ENCODE measurements at regions of chr11 and their contacts with region 1.

Region 1: DNA sequence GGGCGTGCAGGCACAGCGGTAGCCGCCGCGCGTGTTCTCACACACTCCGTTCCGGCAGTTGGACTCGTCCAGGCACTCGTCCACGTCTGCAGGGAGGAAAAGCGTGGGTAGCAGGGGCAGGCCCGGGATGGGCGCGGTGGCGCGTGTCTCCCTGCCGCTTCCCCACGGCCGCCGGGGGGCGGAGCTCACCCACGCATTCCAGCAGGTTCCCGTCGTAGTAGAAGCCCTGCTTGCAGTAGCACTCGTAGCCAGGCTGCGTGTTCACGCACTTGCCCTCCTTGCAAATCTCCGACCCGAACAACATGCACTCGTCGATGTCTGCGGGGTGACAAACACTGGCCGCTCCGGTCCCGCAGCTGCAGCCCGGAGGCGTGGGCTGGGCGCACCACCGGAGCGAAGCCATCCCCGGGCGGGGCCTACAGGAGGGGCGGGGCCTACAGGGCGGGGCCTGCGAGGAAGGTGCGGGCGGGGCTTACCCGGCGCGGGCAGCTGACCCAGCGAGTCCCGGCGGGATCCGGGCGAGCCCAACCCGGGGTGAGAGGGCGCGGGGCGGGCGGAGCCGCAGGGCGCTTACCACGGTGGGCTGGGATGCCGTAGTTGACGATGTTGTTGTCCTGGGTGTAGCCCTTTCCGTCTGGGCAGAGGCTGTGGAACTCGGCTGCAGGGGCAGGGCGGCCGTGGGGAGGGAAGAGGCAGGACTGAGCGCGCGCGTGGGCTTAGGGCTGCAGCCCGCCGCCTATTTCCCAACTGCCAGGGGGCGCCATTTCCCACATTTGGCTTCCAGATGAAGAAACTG is 15.6 kb downstream of the SCYL1 start:
- DNase-seq: peak; percentile 82 to 92 (median 89)
- H3K4me3 ChIP-seq: peak overlapping the region; percentile 74
- H3K4me3 Mint-ChIP-seq: peak overlapping the region; percentile 82 to 94 (median 87)
- H3K27ac ChIP-seq: peak overlapping the region; percentile 44
- H3K27ac Mint-ChIP-seq: peak overlapping the region; percentile 78 to 93 (median 84)
- H3K4me1 ChIP-seq: peaks cover 11% of the 10 kb centered on the region
- H3K4me1 Mint-ChIP-seq: peaks cover 13 to 20% (median 14%) of the 10 kb centered on the region in 3 donors
- H3K27me3 ChIP-seq: no peaks in the 10 kb centered on the region
- H3K27me3 Mint-ChIP-seq: no peaks in the 10 kb centered on the region

Region 2: DNA sequence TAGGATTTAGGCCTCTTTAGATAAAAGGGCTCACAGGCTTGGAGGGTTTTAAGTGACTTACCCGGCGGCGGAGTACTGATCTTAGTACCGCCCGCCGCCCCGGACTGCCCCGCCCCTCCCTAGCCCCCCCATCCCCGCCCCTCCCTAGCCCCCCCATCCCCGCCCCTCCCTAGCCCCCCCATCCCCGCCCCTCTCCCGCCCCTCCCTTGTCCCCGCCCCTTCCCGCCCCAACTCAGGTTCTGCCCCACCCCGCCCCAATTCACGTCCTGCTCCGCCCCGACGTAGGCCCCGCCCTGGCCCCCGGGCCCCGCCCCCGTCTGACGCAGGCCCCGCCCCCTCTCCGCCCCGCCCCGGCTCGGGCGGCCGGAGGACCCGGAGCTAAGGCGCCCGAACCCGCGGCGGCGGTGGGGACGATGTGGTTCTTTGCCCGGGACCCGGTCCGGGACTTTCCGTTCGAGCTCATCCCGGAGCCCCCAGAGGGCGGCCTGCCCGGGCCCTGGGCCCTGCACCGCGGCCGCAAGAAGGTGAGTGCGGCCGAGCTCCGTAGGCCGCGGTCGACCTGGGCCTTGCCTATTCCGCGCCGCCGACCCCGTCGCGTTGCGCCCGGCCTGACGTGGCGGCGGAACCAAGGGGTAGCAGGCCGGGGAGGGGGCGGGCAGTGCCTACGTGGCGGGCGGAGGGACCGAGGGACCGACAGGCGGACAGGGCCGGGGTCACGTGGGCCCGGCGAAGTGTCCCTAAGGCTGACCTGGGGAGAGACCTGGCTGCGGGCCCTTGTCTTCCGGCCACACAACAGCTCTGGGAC is 15.6 kb before region 1 on chr11 and contains the start of gene SCYL1:
- CTCF ChIA-PET with region 1: interaction called, 42 read pairs
- POLR2A ChIA-PET with region 1: interaction called, 7 read pairs
- DNase-seq: peak; percentile 72 to 88 (median 76)
- H3K4me3 ChIP-seq: peak within 1 kb of the TSS; percentile 75
- H3K4me3 Mint-ChIP-seq: peak within 1 kb of the TSS; percentile 81 to 91 (median 85)
- H3K27ac ChIP-seq: peak within 1 kb of the TSS; percentile 76
- H3K27ac Mint-ChIP-seq: peak within 1 kb of the TSS; percentile 73 to 97 (median 92)
- H3K4me1 ChIP-seq: peaks cover 52% of the 10 kb centered on the region
- H3K4me1 Mint-ChIP-seq: peaks cover 45 to 62% (median 46%) of the 10 kb centered on the region in 3 donors
- H3K27me3 ChIP-seq: no peaks in the 10 kb centered on the region
- H3K27me3 Mint-ChIP-seq: peaks cover 0 to 1% of the 10 kb centered on the region in 2 donors
- total RNA-seq, gene SCYL1: 85.1 to 88.5 TPM

Region 3: DNA sequence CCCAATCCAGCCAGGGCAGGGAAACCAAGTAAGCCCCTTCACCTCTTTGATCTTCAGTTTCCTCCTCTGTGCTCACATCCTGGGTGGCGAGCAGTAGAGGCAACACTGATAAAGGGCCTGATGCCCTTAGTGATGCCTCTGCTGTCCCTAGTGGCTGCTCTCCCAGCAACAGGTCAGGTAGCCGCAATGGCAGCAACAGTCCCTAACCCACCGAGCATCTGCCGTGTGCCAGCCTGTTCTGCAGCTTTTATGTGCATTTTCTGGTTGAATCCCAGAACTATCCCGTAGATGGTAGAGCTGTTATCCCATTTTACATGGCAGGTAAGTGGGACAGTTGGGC is 10.4 kb before region 1 on chr11:
- CTCF ChIA-PET with region 1: interaction called, 42 read pairs
- POLR2A ChIA-PET with region 1: interaction called, 7 read pairs
- DNase-seq: peak in 1 of 5 donors; percentile 45
- H3K4me3 ChIP-seq: no peak overlapping the region
- H3K4me3 Mint-ChIP-seq: peak overlapping the region in 1 of 7 donors; percentile 32
- H3K27ac ChIP-seq: no peak overlapping the region
- H3K27ac Mint-ChIP-seq: peak overlapping the region in 7 of 8 donors; percentile 23 to 87 (median 52)
- H3K4me1 ChIP-seq: peaks cover 29% of the 10 kb centered on the region
- H3K4me1 Mint-ChIP-seq: peaks cover 20 to 35% (median 24%) of the 10 kb centered on the region in 3 donors
- H3K27me3 ChIP-seq: no peaks in the 10 kb centered on the region
- H3K27me3 Mint-ChIP-seq: no peaks in the 10 kb centered on the region

Region 4: GRCh38 chr11:65551572-65552398 is 11.3 kb after region 1 on chr11:
- CTCF ChIA-PET with region 1: interaction called, 41 read pairs
- POLR2A ChIA-PET with region 1: interaction called, 6 read pairs
- DNase-seq: peak; percentile 43 to 73 (median 54)
- H3K4me3 ChIP-seq: peak overlapping the region; percentile 17
- H3K4me3 Mint-ChIP-seq: peak overlapping the region in 5 of 7 donors; percentile 3 to 32 (median 13)
- H3K27ac ChIP-seq: no peak overlapping the region
- H3K27ac Mint-ChIP-seq: peak overlapping the region; percentile 51 to 97 (median 80)
- H3K4me1 ChIP-seq: peaks cover 75% of the 10 kb centered on the region
- H3K4me1 Mint-ChIP-seq: peaks cover 56 to 77% (median 62%) of the 10 kb centered on the region in 3 donors
- H3K27me3 ChIP-seq: no peaks in the 10 kb centered on the region
- H3K27me3 Mint-ChIP-seq: no peaks in the 10 kb centered on the region

Region 5: DNA sequence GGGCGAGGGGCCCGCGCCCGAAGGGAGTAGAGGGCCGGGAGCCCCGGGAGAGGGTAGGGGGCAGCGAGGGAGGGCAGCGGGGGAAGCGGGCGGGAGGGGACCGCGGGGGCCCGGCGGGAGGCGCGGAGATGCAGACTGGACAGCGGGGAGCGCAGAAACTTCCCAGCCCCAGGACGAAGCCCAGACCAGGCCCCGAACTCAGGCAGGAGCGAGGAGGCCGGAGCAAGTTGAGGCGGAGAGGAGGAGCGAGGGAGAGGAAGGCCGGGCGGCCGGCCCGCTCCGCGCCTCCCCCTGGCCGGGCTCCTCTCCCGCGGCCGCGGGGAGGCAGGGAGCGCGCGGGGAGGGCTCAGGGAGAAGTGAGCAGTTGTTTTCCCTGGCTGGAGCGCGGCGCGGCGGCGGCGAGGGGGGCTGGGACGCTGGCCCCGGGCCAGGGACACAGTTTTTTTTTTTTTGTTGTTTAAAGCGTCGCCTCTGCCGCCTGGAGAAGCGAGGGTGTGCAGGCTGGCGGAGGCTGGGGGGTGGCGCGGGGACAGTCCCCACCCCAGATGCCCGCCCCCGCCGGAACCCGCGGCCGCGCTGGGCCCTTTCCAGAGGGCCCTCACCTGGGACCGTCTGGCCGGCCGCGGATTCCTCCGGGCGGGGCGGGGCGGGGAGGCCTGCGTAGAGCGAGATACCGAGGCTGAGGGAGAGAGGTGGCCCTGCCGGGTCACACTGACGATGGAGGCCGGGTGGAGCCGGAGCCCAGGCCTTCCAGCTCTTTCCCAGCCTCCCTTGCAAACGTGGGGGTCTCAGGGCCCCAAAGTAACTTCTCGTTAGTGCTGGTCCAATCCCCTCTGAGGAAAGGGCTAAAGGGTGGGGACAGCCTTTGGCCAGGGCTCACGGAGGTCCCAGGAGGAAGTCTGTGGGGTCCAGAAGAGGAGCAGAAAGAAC is 17.8 kb after region 1 on chr11 and contains the start of gene LTBP3:
- CTCF ChIA-PET with region 1: interaction called, 41 read pairs
- POLR2A ChIA-PET with region 1: interaction called, 6 read pairs
- DNase-seq: peak in 4 of 5 donors; percentile 32 to 63 (median 40)
- H3K4me3 ChIP-seq: peak within 1 kb of the TSS; percentile 53
- H3K4me3 Mint-ChIP-seq: peak within 1 kb of the TSS; percentile 80 to 94 (median 91)
- H3K27ac ChIP-seq: peak within 1 kb of the TSS; percentile 54
- H3K27ac Mint-ChIP-seq: peak within 1 kb of the TSS; percentile 84 to 97 (median 94)
- H3K4me1 ChIP-seq: peaks cover 59% of the 10 kb centered on the region
- H3K4me1 Mint-ChIP-seq: peaks cover 37 to 62% (median 44%) of the 10 kb centered on the region in 3 donors
- H3K27me3 ChIP-seq: no peaks in the 10 kb centered on the region
- H3K27me3 Mint-ChIP-seq: peaks cover 0 to 3% of the 10 kb centered on the region in 2 donors
- total RNA-seq, gene LTBP3: 33.2 to 35.4 TPM

Region 6: GRCh38 chr11:65588199-65589054 is 47.9 kb after region 1 on chr11:
- CTCF ChIA-PET with region 1: interaction called, 258 read pairs
- POLR2A ChIA-PET with region 1: interaction called, 16 read pairs
- DNase-seq: peak; percentile 63 to 88 (median 75)
- H3K4me3 ChIP-seq: no peak overlapping the region
- H3K4me3 Mint-ChIP-seq: peak overlapping the region in 4 of 7 donors; percentile 19 to 57 (median 40)
- H3K27ac ChIP-seq: no peak overlapping the region
- H3K27ac Mint-ChIP-seq: peak overlapping the region; percentile 81 to 97 (median 88)
- H3K4me1 ChIP-seq: peaks cover 17% of the 10 kb centered on the region
- H3K4me1 Mint-ChIP-seq: peaks cover 18 to 29% (median 23%) of the 10 kb centered on the region in 3 donors
- H3K27me3 ChIP-seq: no peaks in the 10 kb centered on the region
- H3K27me3 Mint-ChIP-seq: no peaks in the 10 kb centered on the region

Measured in CD8-positive, alpha-beta memory T cell (primary cell).